ENCODE measurements at regions of chr6 and their contacts with region 1.

Region 1: DNA sequence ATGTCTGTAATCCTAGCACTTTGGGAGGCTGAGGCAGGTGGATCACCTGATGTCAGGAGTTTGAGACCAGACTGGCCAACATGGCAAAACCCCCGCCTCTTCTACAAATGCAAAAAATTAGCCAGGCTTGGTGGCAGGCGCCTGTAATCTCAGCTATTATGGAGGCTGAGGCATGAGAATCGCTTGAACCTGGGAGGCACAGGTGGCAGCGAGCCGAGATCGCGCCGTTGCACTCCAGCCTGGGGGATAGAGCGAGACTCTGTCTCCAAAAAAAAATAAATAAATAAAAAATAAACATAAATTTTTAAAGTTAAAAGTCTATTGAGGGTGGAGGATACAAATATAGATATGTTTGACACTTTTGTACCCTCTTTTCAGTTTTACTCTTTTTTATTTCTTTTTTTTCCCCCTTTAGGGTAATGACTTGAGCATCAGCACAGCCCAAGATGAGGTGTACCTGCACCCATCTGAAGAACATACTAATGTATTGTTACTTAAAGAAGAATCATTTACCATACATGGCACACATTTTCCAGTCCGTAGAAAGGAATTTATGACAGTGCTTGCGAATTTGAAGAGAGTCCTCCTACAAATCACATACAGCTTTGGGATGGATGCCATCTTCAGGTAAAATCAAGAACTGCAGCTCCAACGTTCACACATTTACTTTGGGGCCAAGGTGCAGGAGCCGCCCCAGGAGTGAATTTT is 368.9 kb downstream of the LAMA2 start:
- DNase-seq: peak; percentile 83
- ATAC-seq: peak; percentile 57
- H3K4me3 ChIP-seq: no peak overlapping the region
- H3K27ac ChIP-seq: no peak overlapping the region
- H3K4me1 ChIP-seq: peaks cover 15% of the 10 kb centered on the region
- H3K27me3 ChIP-seq: no peaks in the 10 kb centered on the region
- CTCF ChIP-seq: peak; percentile 74

Region 2: GRCh38 chr6:128731249-128732165 is 520.3 kb before region 1 on chr6:
- CTCF ChIA-PET with region 1: no interaction called
- POLR2A ChIA-PET with region 1: no interaction called
- intact Hi-C with region 1: loop called (anchors 10 kb)
- DNase-seq: peak; percentile 65
- ATAC-seq: peak; percentile 74
- H3K4me3 ChIP-seq: no peak overlapping the region
- H3K27ac ChIP-seq: no peak overlapping the region
- H3K4me1 ChIP-seq: no peaks in the 10 kb centered on the region
- H3K27me3 ChIP-seq: no peaks in the 10 kb centered on the region
- CTCF ChIP-seq: peak; percentile 77

Region 3: GRCh38 chr6:128807577-128807976 is 444.2 kb before region 1 on chr6:
- CTCF ChIA-PET with region 1: interaction called, 5 read pairs
- POLR2A ChIA-PET with region 1: no interaction called
- intact Hi-C with region 1: loop called (anchors 1 kb)
- DNase-seq: peak; percentile 44
- ATAC-seq: 0 out of 2 replicates have a peak, but pooled peaks have one; percentile 38
- H3K4me3 ChIP-seq: no peak overlapping the region
- H3K27ac ChIP-seq: no peak overlapping the region
- H3K4me1 ChIP-seq: no peaks in the 10 kb centered on the region
- H3K27me3 ChIP-seq: no peaks in the 10 kb centered on the region
- CTCF ChIP-seq: peak; percentile 67

Region 4: GRCh38 chr6:128963561-128963960 is 288.3 kb before region 1 on chr6:
- CTCF ChIA-PET with region 1: no interaction called
- POLR2A ChIA-PET with region 1: no interaction called
- intact Hi-C with region 1: no loop called
- DNase-seq: no peak
- ATAC-seq: no peak
- H3K4me3 ChIP-seq: no peak overlapping the region
- H3K27ac ChIP-seq: no peak overlapping the region
- H3K4me1 ChIP-seq: no peaks in the 10 kb centered on the region
- H3K27me3 ChIP-seq: no peaks in the 10 kb centered on the region
- CTCF ChIP-seq: no peak

Region 5: GRCh38 chr6:129069006-129069405 is 182.8 kb before region 1 on chr6:
- CTCF ChIA-PET with region 1: no interaction called
- POLR2A ChIA-PET with region 1: no interaction called
- intact Hi-C with region 1: no loop called
- DNase-seq: no peak
- ATAC-seq: no peak
- H3K4me3 ChIP-seq: no peak overlapping the region
- H3K27ac ChIP-seq: no peak overlapping the region
- H3K4me1 ChIP-seq: no peaks in the 10 kb centered on the region
- H3K27me3 ChIP-seq: no peaks in the 10 kb centered on the region
- CTCF ChIP-seq: no peak

Region 6: DNA sequence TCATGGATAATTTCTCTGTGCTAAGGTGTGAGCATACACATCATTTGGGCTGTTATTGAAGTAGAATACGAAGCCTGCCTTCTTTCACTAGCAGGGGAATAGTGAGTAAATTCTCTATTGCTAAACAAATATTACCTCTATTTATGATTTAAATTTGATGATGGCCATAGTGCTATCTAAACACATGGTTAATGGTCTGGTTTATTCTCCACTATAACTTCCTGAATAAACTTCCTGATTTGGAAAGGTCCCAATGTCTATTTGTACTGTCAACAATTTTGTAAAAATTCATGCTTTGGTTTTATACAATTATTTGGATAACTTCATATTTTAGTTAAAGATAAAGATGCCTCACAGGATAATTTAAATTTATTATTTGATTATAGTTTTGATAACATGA is 57.3 kb after region 1 on chr6:
- CTCF ChIA-PET with region 1: no interaction called
- POLR2A ChIA-PET with region 1: no interaction called
- intact Hi-C with region 1: loop called (anchors 5 kb)
- DNase-seq: peak; percentile 57
- ATAC-seq: peak; percentile 47
- H3K4me3 ChIP-seq: no peak overlapping the region
- H3K27ac ChIP-seq: peak overlapping the region; percentile 40
- H3K4me1 ChIP-seq: peaks cover 58% of the 10 kb centered on the region
- H3K27me3 ChIP-seq: no peaks in the 10 kb centered on the region
- CTCF ChIP-seq: no peak

Region 7: GRCh38 chr6:129317931-129318820 is 66.4 kb after region 1 on chr6:
- CTCF ChIA-PET with region 1: no interaction called
- POLR2A ChIA-PET with region 1: no interaction called
- intact Hi-C with region 1: loop called (anchors 2 kb)
- DNase-seq: peak; percentile 87
- ATAC-seq: peak; percentile 97
- H3K4me3 ChIP-seq: no peak overlapping the region; the same call in 1 of the 2 replicates
- H3K27ac ChIP-seq: peak overlapping the region; percentile 50
- H3K4me1 ChIP-seq: peaks cover 33% of the 10 kb centered on the region
- H3K27me3 ChIP-seq: no peaks in the 10 kb centered on the region
- CTCF ChIP-seq: no peak

Region 8: GRCh38 chr6:129575378-129576118 is 323.7 kb after region 1 on chr6:
- CTCF ChIA-PET with region 1: interaction called, 3 read pairs
- POLR2A ChIA-PET with region 1: no interaction called
- intact Hi-C with region 1: loop called (anchors 5 kb)
- DNase-seq: peak; percentile 70
- ATAC-seq: peak; percentile 71
- H3K4me3 ChIP-seq: peak overlapping the region; percentile 49
- H3K27ac ChIP-seq: peak overlapping the region; percentile 44
- H3K4me1 ChIP-seq: peaks cover 7% of the 10 kb centered on the region
- H3K27me3 ChIP-seq: no peaks in the 10 kb centered on the region
- CTCF ChIP-seq: peak; percentile 85